Activated B cell treated with CpG ODN at 0.5 μM for 24 hours (primary cell): ENCODE measurements at regions of chr20 and their contacts with region 1.

Region 1: GRCh38 chr20:17682103-17682888 is at the start of gene RRBP1:
- DNase-seq: peak; percentile 92
- ATAC-seq: peak; percentile 94
- H3K4me3 Mint-ChIP-seq: peak within 1 kb of the TSS; percentile 86
- H3K27ac Mint-ChIP-seq: peak within 1 kb of the TSS; percentile 82
- H3K4me1 Mint-ChIP-seq: peaks cover 20% of the 10 kb centered on the region
- H3K27me3 Mint-ChIP-seq: peaks cover 23% of the 10 kb centered on the region
- CTCF ChIP-seq: no peak
- total RNA-seq, gene RRBP1: 18.9 and 22.0 TPM in 2 replicates

Region 2: GRCh38 chr20:17662333-17663039 is 19.8 kb before region 1 on chr20:
- CTCF ChIA-PET with region 1: no interaction called
- POLR2A ChIA-PET with region 1: no interaction called
- intact Hi-C with region 1: loop called (anchors 2 kb)
- DNase-seq: no peak
- ATAC-seq: peak; percentile 73
- H3K4me3 Mint-ChIP-seq: no peak overlapping the region
- H3K27ac Mint-ChIP-seq: no peak overlapping the region
- H3K4me1 Mint-ChIP-seq: peaks cover 26% of the 10 kb centered on the region
- H3K27me3 Mint-ChIP-seq: no peaks in the 10 kb centered on the region
- CTCF ChIP-seq: no peak

Region 3: GRCh38 chr20:17904027-17904426 is 221.7 kb after region 1 on chr20:
- CTCF ChIA-PET with region 1: interaction called, 108 read pairs
- POLR2A ChIA-PET with region 1: no interaction called
- intact Hi-C with region 1: no loop called
- DNase-seq: no peak
- ATAC-seq: peak; percentile 67
- H3K4me3 Mint-ChIP-seq: no peak overlapping the region
- H3K27ac Mint-ChIP-seq: no peak overlapping the region
- H3K4me1 Mint-ChIP-seq: peaks cover 36% of the 10 kb centered on the region
- H3K27me3 Mint-ChIP-seq: peaks cover 10% of the 10 kb centered on the region
- CTCF ChIP-seq: no peak

Region 4: GRCh38 chr20:18019070-18019469 is 336.8 kb after region 1 on chr20:
- CTCF ChIA-PET with region 1: interaction called, 3 read pairs
- POLR2A ChIA-PET with region 1: no interaction called
- intact Hi-C with region 1: loop called (anchors 1 kb)
- DNase-seq: no peak
- ATAC-seq: peak; percentile 78
- H3K4me3 Mint-ChIP-seq: no peak overlapping the region
- H3K27ac Mint-ChIP-seq: no peak overlapping the region
- H3K4me1 Mint-ChIP-seq: peaks cover 3% of the 10 kb centered on the region
- H3K27me3 Mint-ChIP-seq: no peaks in the 10 kb centered on the region
- CTCF ChIP-seq: no peak

Region 5: GRCh38 chr20:18496740-18497592 is 814.7 kb after region 1 on chr20 and contains the start of gene RBBP9:
- CTCF ChIA-PET with region 1: no interaction called
- POLR2A ChIA-PET with region 1: no interaction called
- intact Hi-C with region 1: loop called (anchors 2 kb)
- DNase-seq: peak; percentile 67
- ATAC-seq: peak; percentile 99
- H3K4me3 Mint-ChIP-seq: peak within 1 kb of the TSS; percentile 99
- H3K27ac Mint-ChIP-seq: peak within 1 kb of the TSS; percentile 87
- H3K4me1 Mint-ChIP-seq: peaks cover 16% of the 10 kb centered on the region
- H3K27me3 Mint-ChIP-seq: peaks cover 3% of the 10 kb centered on the region
- CTCF ChIP-seq: no peak
- total RNA-seq, gene RBBP9: 10.6 TPM in 2 replicates